ENCODE measurements at regions of chr15 and their contacts with region 1.

Region 1: DNA sequence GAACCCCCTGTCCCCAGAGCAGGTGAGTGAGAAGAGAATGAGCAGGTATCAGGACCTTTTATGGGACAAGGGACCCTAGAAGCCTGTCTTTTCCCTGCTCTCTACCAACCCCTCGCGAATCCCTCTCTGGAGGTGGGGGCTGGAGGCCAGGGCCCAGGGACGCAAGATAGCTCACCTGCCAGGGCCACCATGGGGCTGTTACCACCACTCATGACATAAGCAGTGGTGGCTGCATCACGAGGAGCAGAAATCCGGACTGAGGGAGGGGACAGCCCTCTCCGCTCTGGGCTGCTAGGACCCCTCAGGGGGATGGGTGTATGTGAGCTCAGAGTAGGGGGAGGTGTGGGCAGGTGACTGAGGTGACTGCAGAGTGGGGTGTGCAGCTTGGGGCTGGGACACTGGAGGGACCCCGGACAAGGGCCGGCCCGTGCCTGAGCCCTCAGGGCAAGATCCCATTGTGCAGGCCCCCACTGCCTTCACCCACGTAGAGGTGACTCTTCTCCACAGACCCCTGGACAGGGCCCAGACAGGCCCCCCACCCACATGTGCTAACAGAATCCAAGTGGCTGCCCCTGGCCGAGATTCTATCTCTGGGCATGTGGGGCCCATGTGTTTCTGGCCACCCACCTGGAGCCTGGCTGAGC is 190.6 kb downstream of the TBC1D2B start:
- DNase-seq: no peak
- ATAC-seq: no peak
- H3K4me3 ChIP-seq: no peak overlapping the region
- H3K4me3 Mint-ChIP-seq: no peak overlapping the region
- H3K27ac ChIP-seq: no peak overlapping the region
- H3K27ac Mint-ChIP-seq: no peak overlapping the region
- H3K4me1 ChIP-seq: no peaks in the 10 kb centered on the region
- H3K4me1 Mint-ChIP-seq: no peaks in the 10 kb centered on the region
- H3K27me3 ChIP-seq: no peaks in the 10 kb centered on the region
- H3K27me3 Mint-ChIP-seq: no peaks in the 10 kb centered on the region
- CTCF ChIP-seq: no peak

Region 2: GRCh38 chr15:77409259-77410156 is 477.4 kb before region 1 on chr15:
- CTCF ChIA-PET with region 1: no interaction called
- POLR2A ChIA-PET with region 1: no interaction called
- intact Hi-C with region 1: no loop called
- DNase-seq: peak in 5 of 14 experiments; percentile 5 to 68 (median 35)
- ATAC-seq: peak; percentile 92
- H3K4me3 ChIP-seq: no peak overlapping the region
- H3K4me3 Mint-ChIP-seq: peak overlapping the region; percentile 54
- H3K27ac ChIP-seq: no peak overlapping the region
- H3K27ac Mint-ChIP-seq: peak overlapping the region; percentile 13
- H3K4me1 ChIP-seq: peaks cover 6% of the 10 kb centered on the region
- H3K4me1 Mint-ChIP-seq: peaks cover 36% of the 10 kb centered on the region
- H3K27me3 ChIP-seq: no peaks in the 10 kb centered on the region
- H3K27me3 Mint-ChIP-seq: no peaks in the 10 kb centered on the region
- CTCF ChIP-seq: no peak

Region 3: GRCh38 chr15:77858792-77859490 is 28.0 kb before region 1 on chr15:
- CTCF ChIA-PET with region 1: no interaction called
- POLR2A ChIA-PET with region 1: no interaction called
- intact Hi-C with region 1: loop called in 1 of 2 experiments (anchors 1 kb)
- DNase-seq: peak in 1 of 14 experiments; percentile 6
- ATAC-seq: no peak
- H3K4me3 ChIP-seq: no peak overlapping the region
- H3K4me3 Mint-ChIP-seq: no peak overlapping the region
- H3K27ac ChIP-seq: no peak overlapping the region
- H3K27ac Mint-ChIP-seq: no peak overlapping the region
- H3K4me1 ChIP-seq: no peaks in the 10 kb centered on the region
- H3K4me1 Mint-ChIP-seq: no peaks in the 10 kb centered on the region
- H3K27me3 ChIP-seq: no peaks in the 10 kb centered on the region
- H3K27me3 Mint-ChIP-seq: peaks cover 7% of the 10 kb centered on the region
- CTCF ChIP-seq: no peak